CD8-positive, alpha-beta T cell (primary cell): ENCODE measurements at regions of chr7 and their contacts with region 1.

Region 1: GRCh38 chr7:48088559-48089045 is 463 bp upstream of the UPP1 start:
- DNase-seq: no peak
- ATAC-seq: no peak
- H3K4me3 ChIP-seq: peak overlapping the region; percentile 87 to 92
- H3K4me3 Mint-ChIP-seq: peak overlapping the region; percentile 89
- H3K27ac ChIP-seq: peak overlapping the region; percentile 85 to 86
- H3K27ac Mint-ChIP-seq: peak overlapping the region; percentile 94
- H3K4me1 ChIP-seq: peaks cover 71% of the 10 kb centered on the region
- H3K4me1 Mint-ChIP-seq: peaks cover 75% of the 10 kb centered on the region
- H3K27me3 ChIP-seq: no peaks in the 10 kb centered on the region
- H3K27me3 Mint-ChIP-seq: no peaks in the 10 kb centered on the region
- CTCF ChIP-seq: no peak

Region 2: GRCh38 chr7:48035301-48035966 is 53.2 kb before region 1 on chr7 and contains the start of gene C7orf57:
- CTCF ChIA-PET with region 1: interaction called, 4 read pairs
- POLR2A ChIA-PET with region 1: interaction called, 4 read pairs
- intact Hi-C with region 1: loop called (anchors 1 to 5 kb)
- DNase-seq: peak; percentile 69 to 91 (median 85)
- ATAC-seq: peak; percentile 86
- H3K4me3 ChIP-seq: peak within 1 kb of the TSS; percentile 57 to 73
- H3K4me3 Mint-ChIP-seq: peak within 1 kb of the TSS; percentile 81
- H3K27ac ChIP-seq: peak within 1 kb of the TSS in 1 of 2 experiments; percentile 37
- H3K27ac Mint-ChIP-seq: no peak within 1 kb of the TSS
- H3K4me1 ChIP-seq: peaks cover 8% of the 10 kb centered on the region
- H3K4me1 Mint-ChIP-seq: peaks cover 10% of the 10 kb centered on the region
- H3K27me3 ChIP-seq: peaks cover 8 to 10% of the 10 kb centered on the region in 2 experiments
- H3K27me3 Mint-ChIP-seq: peaks cover 13% of the 10 kb centered on the region
- CTCF ChIP-seq: no peak
- total RNA-seq, gene C7orf57: not detected

Region 3: DNA sequence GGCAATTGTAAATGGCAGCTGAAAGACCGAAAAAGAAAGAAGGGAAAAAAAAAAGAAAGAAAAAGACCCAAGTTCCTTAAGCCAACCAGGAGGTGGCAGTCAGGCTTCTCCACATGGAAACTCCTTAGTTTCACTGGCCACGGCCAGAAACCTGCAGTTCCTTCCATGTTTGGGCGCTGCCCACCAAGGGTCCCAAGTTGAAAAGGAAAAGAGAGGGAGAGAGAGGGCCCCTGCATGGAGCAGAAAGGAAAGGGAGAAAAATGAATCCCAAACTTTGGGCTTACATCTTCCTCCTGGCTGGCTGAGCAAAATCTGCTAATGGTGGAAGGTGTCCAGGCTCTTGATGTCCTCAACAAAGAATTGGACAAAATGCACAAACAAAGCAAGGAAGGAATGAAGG is 50.9 kb after region 1 on chr7:
- CTCF ChIA-PET with region 1: no interaction called
- POLR2A ChIA-PET with region 1: no interaction called
- intact Hi-C with region 1: no loop called
- DNase-seq: no peak
- ATAC-seq: no peak
- H3K4me3 ChIP-seq: no peak overlapping the region
- H3K4me3 Mint-ChIP-seq: no peak overlapping the region
- H3K27ac ChIP-seq: no peak overlapping the region
- H3K27ac Mint-ChIP-seq: no peak overlapping the region
- H3K4me1 ChIP-seq: no peaks in the 10 kb centered on the region
- H3K4me1 Mint-ChIP-seq: peaks cover 2% of the 10 kb centered on the region
- H3K27me3 ChIP-seq: no peaks in the 10 kb centered on the region
- H3K27me3 Mint-ChIP-seq: peaks cover 2% of the 10 kb centered on the region
- CTCF ChIP-seq: no peak

Region 4: GRCh38 chr7:48150086-48150485 is 61.5 kb after region 1 on chr7:
- CTCF ChIA-PET with region 1: no interaction called
- POLR2A ChIA-PET with region 1: no interaction called
- intact Hi-C with region 1: no loop called
- DNase-seq: no peak
- ATAC-seq: no peak
- H3K4me3 ChIP-seq: no peak overlapping the region
- H3K4me3 Mint-ChIP-seq: no peak overlapping the region
- H3K27ac ChIP-seq: no peak overlapping the region
- H3K27ac Mint-ChIP-seq: no peak overlapping the region
- H3K4me1 ChIP-seq: no peaks in the 10 kb centered on the region
- H3K4me1 Mint-ChIP-seq: no peaks in the 10 kb centered on the region
- H3K27me3 ChIP-seq: no peaks in the 10 kb centered on the region
- H3K27me3 Mint-ChIP-seq: peaks cover 14% of the 10 kb centered on the region
- CTCF ChIP-seq: no peak